Activated B cell treated with CpG ODN at 0.5 μM for 24 hours (primary cell): ENCODE measurements at regions of chr13 and their contacts with region 1.

Region 1: DNA sequence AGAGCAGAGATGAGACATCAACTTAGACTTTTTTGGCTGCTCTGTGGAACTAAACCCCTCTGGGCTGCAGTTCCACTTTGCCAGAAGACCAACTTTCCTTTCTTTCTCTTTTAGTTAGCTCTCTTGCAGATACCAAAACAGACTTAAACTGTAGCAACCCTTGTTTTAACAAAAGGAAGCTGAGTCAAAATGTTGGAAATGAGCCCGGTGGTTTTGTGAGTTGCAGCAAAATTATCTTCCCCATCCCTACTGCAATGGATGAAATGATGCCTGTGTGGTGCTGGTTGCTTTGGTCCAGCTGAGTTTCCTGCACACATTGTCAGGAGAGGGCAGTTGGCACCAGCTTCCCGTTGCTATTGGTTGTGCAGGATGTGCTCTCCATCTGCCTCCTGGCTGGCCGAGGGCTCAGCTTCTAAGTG is 115.3 kb downstream of the LRCH1 start:
- DNase-seq: no peak
- ATAC-seq: peak; percentile 32
- H3K4me3 Mint-ChIP-seq: peak overlapping the region; percentile 81
- H3K27ac Mint-ChIP-seq: peak overlapping the region; percentile 86
- H3K4me1 Mint-ChIP-seq: peaks cover 72% of the 10 kb centered on the region
- H3K27me3 Mint-ChIP-seq: no peaks in the 10 kb centered on the region
- CTCF ChIP-seq: no peak

Region 2: GRCh38 chr13:46369506-46370277 is 298.6 kb before region 1 on chr13:
- CTCF ChIA-PET with region 1: no interaction called
- POLR2A ChIA-PET with region 1: no interaction called
- intact Hi-C with region 1: loop called (anchors 10 kb)
- DNase-seq: no peak
- ATAC-seq: peak; percentile 64
- H3K4me3 Mint-ChIP-seq: peak overlapping the region; percentile 79
- H3K27ac Mint-ChIP-seq: peak overlapping the region; percentile 90
- H3K4me1 Mint-ChIP-seq: peaks cover 77% of the 10 kb centered on the region
- H3K27me3 Mint-ChIP-seq: no peaks in the 10 kb centered on the region
- CTCF ChIP-seq: no peak

Region 3: DNA sequence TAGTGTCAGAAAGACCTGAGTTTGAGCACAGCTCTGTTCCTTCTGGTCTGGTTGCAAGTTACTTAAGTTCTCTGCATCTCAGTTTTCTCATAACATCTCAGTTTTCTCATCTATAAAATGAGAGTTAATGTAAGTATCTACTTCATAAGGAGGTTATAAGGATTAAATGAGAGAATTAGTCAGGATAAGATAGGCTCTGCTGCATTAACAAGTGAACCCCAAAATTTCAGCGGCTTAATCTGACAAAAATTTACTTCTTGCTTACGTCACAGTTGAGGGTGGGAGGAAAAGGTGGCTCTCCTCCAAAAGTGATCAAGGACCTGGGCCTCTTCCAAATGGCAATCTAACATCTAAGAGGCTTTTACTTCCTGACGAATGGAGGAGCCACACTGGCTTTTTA is 146.8 kb before region 1 on chr13:
- CTCF ChIA-PET with region 1: no interaction called
- POLR2A ChIA-PET with region 1: interaction called, 10 read pairs
- intact Hi-C with region 1: no loop called
- DNase-seq: no peak
- ATAC-seq: no peak
- H3K4me3 Mint-ChIP-seq: no peak overlapping the region
- H3K27ac Mint-ChIP-seq: no peak overlapping the region
- H3K4me1 Mint-ChIP-seq: no peaks in the 10 kb centered on the region
- H3K27me3 Mint-ChIP-seq: peaks cover 11% of the 10 kb centered on the region
- CTCF ChIP-seq: no peak

Region 4: DNA sequence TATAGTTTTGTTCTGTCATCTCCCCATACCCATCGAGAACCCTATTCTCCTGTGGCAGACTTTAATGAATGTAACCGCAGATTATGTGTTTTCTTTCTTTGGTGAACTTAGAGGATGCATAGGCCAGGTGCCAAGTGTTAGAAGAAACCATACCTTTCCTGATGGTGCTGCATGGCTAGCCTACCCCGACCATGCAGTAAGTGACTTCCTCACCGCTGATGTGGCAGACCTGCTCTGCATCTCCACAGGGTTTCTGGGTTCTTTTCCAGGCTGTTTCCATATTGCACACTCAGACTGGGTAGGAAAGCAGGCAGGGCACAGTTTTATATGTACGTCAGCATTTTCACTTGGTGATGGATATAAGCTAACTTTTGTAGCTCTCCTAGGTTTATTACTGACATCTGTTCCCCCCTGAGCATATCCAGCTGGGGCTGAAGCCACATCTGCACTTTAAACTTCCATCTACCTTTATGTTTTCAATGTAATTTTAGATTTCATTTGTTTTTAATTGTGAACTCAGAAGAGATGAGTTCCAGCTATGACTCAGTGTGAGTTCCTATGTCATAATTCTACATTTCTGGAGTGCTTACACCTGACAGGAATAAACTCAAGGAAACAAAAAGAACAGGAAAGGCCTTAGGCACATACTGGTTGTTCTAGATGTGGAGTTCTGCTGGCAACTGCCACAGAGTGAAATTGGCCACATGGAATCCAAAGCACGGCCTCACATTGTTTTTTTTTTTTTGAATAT is 73.0 kb before region 1 on chr13:
- CTCF ChIA-PET with region 1: no interaction called
- POLR2A ChIA-PET with region 1: interaction called, 3 read pairs
- intact Hi-C with region 1: loop called (anchors 5 kb)
- DNase-seq: no peak
- ATAC-seq: peak; percentile 74
- H3K4me3 Mint-ChIP-seq: peak overlapping the region; percentile 60
- H3K27ac Mint-ChIP-seq: peak overlapping the region; percentile 86
- H3K4me1 Mint-ChIP-seq: peaks cover 95% of the 10 kb centered on the region
- H3K27me3 Mint-ChIP-seq: no peaks in the 10 kb centered on the region
- CTCF ChIP-seq: no peak

Region 5: GRCh38 chr13:46622630-46623256 is 45.6 kb before region 1 on chr13:
- CTCF ChIA-PET with region 1: interaction called, 3 read pairs
- POLR2A ChIA-PET with region 1: interaction called, 3 read pairs
- intact Hi-C with region 1: loop called (anchors 2 kb)
- DNase-seq: no peak
- ATAC-seq: no peak
- H3K4me3 Mint-ChIP-seq: peak overlapping the region; percentile 41
- H3K27ac Mint-ChIP-seq: peak overlapping the region; percentile 60
- H3K4me1 Mint-ChIP-seq: peaks cover 94% of the 10 kb centered on the region
- H3K27me3 Mint-ChIP-seq: no peaks in the 10 kb centered on the region
- CTCF ChIP-seq: no peak

Region 6: GRCh38 chr13:46655377-46656180 is 12.7 kb before region 1 on chr13:
- CTCF ChIA-PET with region 1: no interaction called
- POLR2A ChIA-PET with region 1: interaction called, 4 read pairs
- intact Hi-C with region 1: loop called (anchors 1 kb)
- DNase-seq: no peak
- ATAC-seq: no peak
- H3K4me3 Mint-ChIP-seq: peak overlapping the region; percentile 28
- H3K27ac Mint-ChIP-seq: peak overlapping the region; percentile 70
- H3K4me1 Mint-ChIP-seq: peaks cover 51% of the 10 kb centered on the region
- H3K27me3 Mint-ChIP-seq: no peaks in the 10 kb centered on the region
- CTCF ChIP-seq: no peak

Region 7: DNA sequence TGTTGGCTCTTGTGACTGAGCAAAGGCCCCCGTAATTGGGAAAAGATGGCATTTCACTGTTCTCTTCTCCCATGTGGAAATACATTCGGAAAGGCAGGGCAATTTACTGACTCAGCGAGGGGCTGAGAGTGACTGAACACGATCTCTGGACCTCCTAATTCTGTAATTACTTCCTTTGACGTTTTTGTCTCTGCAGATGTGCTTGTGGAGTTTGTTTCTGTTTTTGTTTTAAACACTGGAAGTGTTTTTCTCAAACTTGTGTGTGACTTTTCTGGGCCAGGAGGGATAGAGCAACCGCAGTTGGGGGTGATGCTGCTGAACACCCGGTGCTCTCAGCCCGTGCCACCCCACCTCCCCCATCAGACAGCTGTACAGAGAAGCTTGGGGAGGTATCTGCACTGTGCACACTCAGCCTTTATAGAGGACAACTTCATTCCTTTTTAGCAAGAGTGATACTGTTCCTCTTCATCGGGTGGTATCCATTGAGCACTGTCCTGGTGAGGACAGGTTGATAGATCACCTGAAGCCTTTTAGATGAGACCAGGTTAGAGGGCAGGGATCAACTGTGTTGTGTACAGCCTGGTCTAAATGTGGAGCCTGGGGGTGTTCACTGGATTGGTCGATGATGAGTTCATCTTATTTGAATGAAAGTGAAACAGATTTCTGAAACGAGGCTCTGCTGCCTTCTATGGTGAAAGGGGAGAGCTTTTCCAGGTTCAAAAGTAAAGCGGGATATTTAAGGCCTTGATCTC is 11.2 kb after region 1 on chr13:
- CTCF ChIA-PET with region 1: interaction called, 3 read pairs
- POLR2A ChIA-PET with region 1: interaction called, 6 read pairs
- intact Hi-C with region 1: loop called (anchors 1 kb)
- DNase-seq: peak; percentile 20
- ATAC-seq: peak; percentile 90
- H3K4me3 Mint-ChIP-seq: no peak overlapping the region
- H3K27ac Mint-ChIP-seq: no peak overlapping the region
- H3K4me1 Mint-ChIP-seq: peaks cover 29% of the 10 kb centered on the region
- H3K27me3 Mint-ChIP-seq: no peaks in the 10 kb centered on the region
- CTCF ChIP-seq: no peak